GM12878 (cell line): ENCODE measurements at regions of chr12 and their contacts with region 1.

Region 1: GRCh38 chr12:94207849-94208621 is 59.7 kb downstream of the PLXNC1 start:
- DNase-seq: peak; percentile 89
- ATAC-seq: peak; percentile 78
- H3K4me3 ChIP-seq: peak overlapping the region; percentile 58
- H3K27ac ChIP-seq: peak overlapping the region; percentile 100
- H3K4me1 ChIP-seq: peaks cover 47% of the 10 kb centered on the region
- H3K27me3 ChIP-seq: no peaks in the 10 kb centered on the region
- CTCF ChIP-seq: no peak
- EP300 ChIP-seq: peak in 1 of 2 experiments; percentile 77; a peak in 3 of 4 replicates
- POLR2A ChIP-seq: no peak; the same call in 1 of the 2 replicates
- RAD21 ChIP-seq: no peak; the same call in 1 of the 2 replicates

Region 2: DNA sequence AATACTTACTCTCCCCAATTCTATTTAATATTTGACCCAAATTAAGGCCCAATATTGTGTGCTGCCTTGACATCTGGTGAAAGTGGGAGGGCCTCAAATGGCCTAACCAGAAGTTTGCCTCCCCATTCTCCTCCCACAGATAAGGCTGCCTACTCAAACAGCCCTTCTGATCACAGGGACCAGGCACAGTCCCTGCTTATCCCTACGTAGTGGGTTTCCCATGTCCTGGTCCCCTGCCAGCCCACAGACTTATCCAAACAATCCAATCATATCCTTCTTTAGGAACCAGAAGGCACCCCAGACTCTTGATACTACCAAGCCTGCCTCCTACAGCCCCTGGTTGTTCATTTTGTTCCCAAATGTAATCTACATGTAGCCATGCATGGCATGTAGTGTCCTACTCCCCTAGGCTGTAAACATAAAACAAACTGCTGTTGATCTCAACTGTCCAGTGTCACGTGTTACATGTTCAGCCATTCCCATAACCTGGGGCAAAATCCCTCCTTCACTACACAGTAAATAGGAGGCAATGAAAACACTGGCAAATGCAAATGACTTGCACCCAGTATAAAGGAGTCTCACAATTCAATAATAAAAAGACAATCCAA is 1328.2 kb before region 1 on chr12:
- CTCF ChIA-PET with region 1: no interaction called
- POLR2A ChIA-PET with region 1: no interaction called
- RAD21 ChIA-PET with region 1: no interaction called
- SMC1A ChIA-PET with region 1: no interaction called
- in situ Hi-C with region 1: no loop called
- intact Hi-C with region 1: no loop called
- DNase-seq: no peak
- ATAC-seq: no peak
- H3K4me3 ChIP-seq: no peak overlapping the region
- H3K27ac ChIP-seq: no peak overlapping the region
- H3K4me1 ChIP-seq: no peaks in the 10 kb centered on the region
- H3K27me3 ChIP-seq: no peaks in the 10 kb centered on the region
- CTCF ChIP-seq: no peak
- EP300 ChIP-seq: no peak
- POLR2A ChIP-seq: no peak
- RAD21 ChIP-seq: no peak

Region 3: DNA sequence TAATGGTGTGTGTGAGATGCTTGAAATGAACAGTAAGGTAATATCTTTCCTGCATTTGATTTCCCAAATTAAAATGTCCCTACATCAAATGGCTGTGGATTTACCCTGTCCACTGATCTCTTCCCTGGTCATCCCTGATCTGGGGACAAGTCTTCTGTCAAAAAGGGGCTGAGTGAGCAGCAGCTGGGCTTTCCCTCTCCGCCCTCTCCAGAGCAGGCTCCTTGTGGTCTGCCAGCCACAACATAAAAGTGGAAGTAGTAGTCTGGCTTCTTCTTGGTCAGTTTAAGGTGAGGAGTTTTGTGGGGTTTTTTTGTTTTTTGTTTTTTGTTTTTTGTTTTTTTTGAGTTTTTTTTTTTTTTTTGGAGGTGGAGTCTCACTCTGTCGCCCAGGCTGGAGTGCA is 84.9 kb before region 1 on chr12:
- CTCF ChIA-PET with region 1: no interaction called
- POLR2A ChIA-PET with region 1: no interaction called
- RAD21 ChIA-PET with region 1: no interaction called
- SMC1A ChIA-PET with region 1: no interaction called
- in situ Hi-C with region 1: no loop called
- intact Hi-C with region 1: no loop called
- DNase-seq: no peak
- ATAC-seq: peak; percentile 79
- H3K4me3 ChIP-seq: no peak overlapping the region
- H3K27ac ChIP-seq: no peak overlapping the region
- H3K4me1 ChIP-seq: peaks cover 6% of the 10 kb centered on the region; the same call in 1 of the 2 replicates
- H3K27me3 ChIP-seq: no peaks in the 10 kb centered on the region; a peak in 1 of 4 replicates
- CTCF ChIP-seq: no peak
- EP300 ChIP-seq: no peak
- POLR2A ChIP-seq: no peak
- RAD21 ChIP-seq: no peak

Region 4: GRCh38 chr12:94157981-94158411 is 50.0 kb before region 1 on chr12:
- CTCF ChIA-PET with region 1: interaction called, 13 read pairs
- POLR2A ChIA-PET with region 1: interaction called, 51 read pairs
- RAD21 ChIA-PET with region 1: interaction called, 113 read pairs
- SMC1A ChIA-PET with region 1: interaction called, 238 read pairs
- in situ Hi-C with region 1: no loop called
- intact Hi-C with region 1: no loop called
- DNase-seq: peak; percentile 59
- ATAC-seq: peak; percentile 84
- H3K4me3 ChIP-seq: peak overlapping the region; percentile 54; the same call in 1 of the 2 replicates
- H3K27ac ChIP-seq: peak overlapping the region; percentile 83
- H3K4me1 ChIP-seq: peaks cover 21% of the 10 kb centered on the region
- H3K27me3 ChIP-seq: no peaks in the 10 kb centered on the region
- CTCF ChIP-seq: no peak
- EP300 ChIP-seq: no peak
- POLR2A ChIP-seq: peak; percentile 51
- RAD21 ChIP-seq: no peak

Region 5: DNA sequence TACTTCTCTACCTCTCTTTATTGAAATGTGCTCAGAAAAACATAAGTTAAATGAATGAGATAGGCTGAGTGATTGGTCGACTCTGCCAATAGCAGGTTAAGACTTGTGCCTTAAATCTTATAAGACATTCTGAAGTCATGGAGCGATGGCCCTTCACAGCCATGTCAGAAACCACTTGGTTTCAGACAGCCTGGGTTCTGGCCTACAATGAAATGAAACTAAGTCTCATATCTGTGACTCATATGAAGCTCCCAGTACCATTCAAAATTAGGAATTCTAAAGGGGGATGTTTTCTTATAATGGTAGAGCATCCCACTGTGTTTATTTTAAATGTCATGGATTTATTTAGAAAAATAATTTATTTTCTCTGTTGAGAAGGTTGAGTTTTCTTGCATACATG is 17.0 kb before region 1 on chr12:
- CTCF ChIA-PET with region 1: interaction called, 4 read pairs
- POLR2A ChIA-PET with region 1: interaction called, 3 read pairs
- RAD21 ChIA-PET with region 1: interaction called, 11 read pairs
- SMC1A ChIA-PET with region 1: interaction called, 39 read pairs
- in situ Hi-C with region 1: no loop called
- intact Hi-C with region 1: no loop called
- DNase-seq: no peak
- ATAC-seq: peak; percentile 83
- H3K4me3 ChIP-seq: no peak overlapping the region
- H3K27ac ChIP-seq: peak overlapping the region; percentile 70
- H3K4me1 ChIP-seq: peaks cover 23% of the 10 kb centered on the region
- H3K27me3 ChIP-seq: no peaks in the 10 kb centered on the region
- CTCF ChIP-seq: no peak
- EP300 ChIP-seq: no peak
- POLR2A ChIP-seq: no peak
- RAD21 ChIP-seq: no peak

Region 6: GRCh38 chr12:94228488-94228907 is 20.5 kb after region 1 on chr12:
- CTCF ChIA-PET with region 1: interaction called, 5 read pairs
- POLR2A ChIA-PET with region 1: interaction called, 9 read pairs
- RAD21 ChIA-PET with region 1: interaction called, 7 read pairs
- SMC1A ChIA-PET with region 1: interaction called, 85 read pairs
- in situ Hi-C with region 1: no loop called
- intact Hi-C with region 1: loop called (anchors 1 kb)
- DNase-seq: no peak
- ATAC-seq: peak; percentile 83
- H3K4me3 ChIP-seq: no peak overlapping the region
- H3K27ac ChIP-seq: 0 out of 2 replicates have a peak overlapping the region, but pooled peaks have one; percentile 13
- H3K4me1 ChIP-seq: peaks cover 39% of the 10 kb centered on the region
- H3K27me3 ChIP-seq: no peaks in the 10 kb centered on the region
- CTCF ChIP-seq: no peak
- EP300 ChIP-seq: peak in 1 of 2 experiments; percentile 39; a peak in 1 of 4 replicates
- POLR2A ChIP-seq: no peak
- RAD21 ChIP-seq: no peak

Region 7: DNA sequence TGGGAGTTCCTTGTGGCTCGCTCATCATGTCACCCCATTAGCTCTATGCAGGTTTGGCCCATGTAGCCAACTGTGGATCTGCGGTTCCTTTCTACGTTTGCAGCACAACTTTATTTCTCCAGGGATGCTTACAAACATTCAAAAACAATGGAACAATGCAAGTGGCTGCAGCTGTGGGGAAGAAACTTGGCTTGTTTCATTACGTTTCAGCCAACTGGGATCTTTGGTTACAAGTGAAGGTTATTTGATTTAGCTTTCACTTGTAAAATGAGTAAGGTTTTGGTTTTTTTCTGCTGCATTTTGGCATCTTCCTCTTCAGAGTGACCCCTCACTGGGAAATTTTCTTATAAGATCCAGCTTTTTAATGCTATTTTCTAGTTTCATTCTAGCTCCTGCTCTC is 46.2 kb after region 1 on chr12:
- CTCF ChIA-PET with region 1: interaction called, 3 read pairs
- POLR2A ChIA-PET with region 1: interaction called, 56 read pairs
- RAD21 ChIA-PET with region 1: interaction called, 107 read pairs
- SMC1A ChIA-PET with region 1: interaction called, 95 read pairs
- in situ Hi-C with region 1: no loop called
- intact Hi-C with region 1: loop called (anchors 1 kb)
- DNase-seq: no peak
- ATAC-seq: no peak
- H3K4me3 ChIP-seq: no peak overlapping the region
- H3K27ac ChIP-seq: no peak overlapping the region
- H3K4me1 ChIP-seq: peaks cover 19% of the 10 kb centered on the region
- H3K27me3 ChIP-seq: no peaks in the 10 kb centered on the region
- CTCF ChIP-seq: no peak
- EP300 ChIP-seq: no peak
- POLR2A ChIP-seq: no peak
- RAD21 ChIP-seq: no peak

Region 8: GRCh38 chr12:94269316-94269999 is 61.4 kb after region 1 on chr12:
- CTCF ChIA-PET with region 1: interaction called, 9 read pairs
- POLR2A ChIA-PET with region 1: interaction called, 4 read pairs
- RAD21 ChIA-PET with region 1: interaction called, 107 read pairs
- SMC1A ChIA-PET with region 1: interaction called, 20 read pairs
- in situ Hi-C with region 1: no loop called
- intact Hi-C with region 1: no loop called
- DNase-seq: no peak
- ATAC-seq: peak; percentile 66
- H3K4me3 ChIP-seq: no peak overlapping the region
- H3K27ac ChIP-seq: 0 out of 2 replicates have a peak overlapping the region, but pooled peaks have one; percentile 15
- H3K4me1 ChIP-seq: peaks cover 61% of the 10 kb centered on the region
- H3K27me3 ChIP-seq: no peaks in the 10 kb centered on the region
- CTCF ChIP-seq: no peak
- EP300 ChIP-seq: no peak
- POLR2A ChIP-seq: no peak
- RAD21 ChIP-seq: no peak